Activated T-helper 2 cell treated with anti-CD3 and anti-CD28 coated beads, Interferon-gamma antibody, Interleukin-2, Interleukin-4, amounts not matched to agents 10 μg/mL and 5 μg/mL and 100 μg/mL, durations not matched to agents 14 hours and 24 hours and 36 hours (primary cell): ENCODE measurements at regions of chr14 and their contacts with region 1.

Region 1: DNA sequence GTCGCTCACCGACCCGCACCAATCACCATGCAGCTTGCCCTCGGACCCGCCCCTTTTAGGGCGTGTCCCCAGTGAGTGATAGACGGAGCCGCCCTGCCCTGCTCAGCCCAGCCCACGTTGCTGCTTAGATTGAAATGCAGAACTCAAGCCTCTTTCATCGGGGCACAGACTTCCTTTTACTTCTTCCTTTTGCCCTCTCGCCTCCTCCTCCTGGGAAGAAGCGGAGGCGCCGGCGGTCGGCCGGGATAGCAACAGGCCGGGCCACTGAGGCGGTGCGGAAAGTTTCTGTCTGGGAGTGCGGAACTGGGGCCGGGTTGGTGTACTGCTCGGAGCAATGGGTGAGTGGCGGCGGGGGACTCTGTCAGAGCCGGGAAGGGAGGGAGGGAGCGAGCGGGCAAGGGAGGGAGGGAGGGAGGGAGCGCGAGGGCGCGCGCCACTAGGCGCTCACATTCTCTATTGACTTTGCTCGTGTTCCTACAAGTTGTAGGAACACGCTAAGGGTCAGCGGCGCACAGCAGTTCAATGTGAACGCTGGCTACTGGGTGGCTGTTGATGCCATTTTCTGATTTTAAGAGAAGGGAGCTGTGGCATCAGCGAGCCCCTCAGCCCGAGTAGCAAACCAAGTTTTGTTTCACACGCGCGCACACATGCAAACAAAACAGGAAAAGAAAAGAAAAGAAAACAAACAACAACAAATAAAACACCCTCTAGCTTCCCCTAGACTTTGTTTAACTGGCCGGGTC is at the start of gene PAX9:
- DNase-seq: no peak
- H3K4me3 Mint-ChIP-seq: no peak within 1 kb of the TSS
- H3K27ac Mint-ChIP-seq: peak within 1 kb of the TSS; percentile 59
- H3K4me1 Mint-ChIP-seq: peaks cover 13% of the 10 kb centered on the region
- H3K27me3 Mint-ChIP-seq: peaks cover 89% of the 10 kb centered on the region
- total RNA-seq, gene PAX9: not detected in 2 replicates

Region 2: GRCh38 chr14:37594238-37594914 is 932.4 kb after region 1 on chr14:
- intact Hi-C with region 1: loop called (anchors 2 kb)
- DNase-seq: no peak
- H3K4me3 Mint-ChIP-seq: peak overlapping the region; percentile 65
- H3K27ac Mint-ChIP-seq: peak overlapping the region; percentile 55
- H3K4me1 Mint-ChIP-seq: peaks cover 7% of the 10 kb centered on the region
- H3K27me3 Mint-ChIP-seq: peaks cover 74% of the 10 kb centered on the region